A549 (cell line): ENCODE measurements at regions of chr2 and their contacts with region 1.

Region 1: GRCh38 chr2:158745044-158745865 is 49.9 kb upstream of the DAPL1 start:
- DNase-seq: peak; percentile 37 to 66
- ATAC-seq: peak; percentile 79 to 91
- H3K4me3 ChIP-seq: no peak overlapping the region
- H3K27ac ChIP-seq: no peak overlapping the region
- H3K4me1 ChIP-seq: no peaks in the 10 kb centered on the region
- CTCF ChIP-seq: peak; percentile 74
- EP300 ChIP-seq: no peak
- POLR2A ChIP-seq: no peak
- RAD21 ChIP-seq: peak; percentile 84 to 88

Region 2: DNA sequence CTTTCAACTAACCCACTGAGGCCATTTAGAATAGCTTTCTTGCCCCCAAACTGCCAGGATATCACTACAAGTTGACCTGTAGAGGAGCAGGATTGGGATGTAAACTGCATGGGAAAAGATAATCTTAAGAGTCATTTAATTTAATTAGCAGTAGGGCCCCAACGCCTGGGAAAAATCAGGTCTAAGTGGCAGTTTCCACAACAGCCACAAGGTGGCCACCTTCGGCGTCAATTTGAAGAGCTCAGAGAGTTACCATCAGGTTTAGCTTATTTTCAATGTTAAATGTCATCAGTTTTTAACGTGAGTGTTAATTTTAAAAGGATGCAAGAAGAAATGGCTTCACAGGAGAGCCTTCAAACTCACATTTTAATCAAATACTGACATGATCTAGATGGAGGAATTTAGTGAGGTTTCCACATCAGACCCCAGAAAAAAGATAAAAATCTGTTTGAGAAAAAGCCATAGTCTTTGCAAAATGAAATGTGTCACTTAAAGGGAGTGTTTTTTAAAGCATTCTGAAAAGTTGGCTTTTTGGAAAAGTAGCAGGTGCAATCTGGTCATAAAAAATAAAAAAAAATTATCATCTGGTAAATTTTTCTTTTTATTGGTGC is 720.9 kb before region 1 on chr2:
- CTCF ChIA-PET with region 1: interaction called, 254 read pairs
- POLR2A ChIA-PET with region 1: no interaction called
- DNase-seq: peak; percentile 18 to 39
- ATAC-seq: peak; percentile 59 to 89; a peak in 3 of 6 replicates
- H3K4me3 ChIP-seq: no peak overlapping the region
- H3K27ac ChIP-seq: no peak overlapping the region
- H3K4me1 ChIP-seq: no peaks in the 10 kb centered on the region
- CTCF ChIP-seq: peak; percentile 81
- EP300 ChIP-seq: no peak
- POLR2A ChIP-seq: no peak
- RAD21 ChIP-seq: peak; percentile 77 to 78

Region 3: GRCh38 chr2:158179660-158180059 is 565.6 kb before region 1 on chr2:
- CTCF ChIA-PET with region 1: interaction called, 60 read pairs
- POLR2A ChIA-PET with region 1: no interaction called
- DNase-seq: peak in 1 of 2 experiments; percentile 18
- ATAC-seq: peak; percentile 54 to 74; a peak in 3 of 6 replicates
- H3K4me3 ChIP-seq: no peak overlapping the region
- H3K27ac ChIP-seq: no peak overlapping the region
- H3K4me1 ChIP-seq: no peaks in the 10 kb centered on the region
- CTCF ChIP-seq: peak; percentile 59
- EP300 ChIP-seq: no peak
- POLR2A ChIP-seq: no peak
- RAD21 ChIP-seq: peak; percentile 68 to 72

Region 4: DNA sequence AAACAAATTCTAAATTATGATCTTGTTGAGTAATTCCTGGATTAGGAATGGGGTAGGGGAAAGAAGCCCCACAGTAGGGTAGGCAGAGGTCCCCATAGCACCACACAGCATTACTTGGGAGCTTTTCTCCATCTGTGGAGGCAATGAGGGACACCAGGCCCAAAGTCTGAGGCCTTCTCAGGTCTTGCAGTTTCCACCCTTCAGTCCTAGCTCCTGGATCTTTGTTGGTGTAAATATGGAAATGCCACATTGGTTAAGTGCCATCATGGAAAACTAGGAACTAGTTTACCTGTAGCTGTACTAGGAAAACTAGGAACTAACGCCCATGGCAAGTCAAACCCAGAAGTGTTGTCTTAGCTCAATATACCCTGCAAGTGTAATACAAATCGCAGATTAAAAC is 63.4 kb before region 1 on chr2:
- CTCF ChIA-PET with region 1: interaction called, 13 read pairs
- POLR2A ChIA-PET with region 1: no interaction called
- DNase-seq: no peak
- ATAC-seq: no peak
- H3K4me3 ChIP-seq: no peak overlapping the region
- H3K27ac ChIP-seq: no peak overlapping the region
- H3K4me1 ChIP-seq: no peaks in the 10 kb centered on the region
- CTCF ChIP-seq: no peak
- EP300 ChIP-seq: no peak
- POLR2A ChIP-seq: no peak
- RAD21 ChIP-seq: no peak

Region 5: DNA sequence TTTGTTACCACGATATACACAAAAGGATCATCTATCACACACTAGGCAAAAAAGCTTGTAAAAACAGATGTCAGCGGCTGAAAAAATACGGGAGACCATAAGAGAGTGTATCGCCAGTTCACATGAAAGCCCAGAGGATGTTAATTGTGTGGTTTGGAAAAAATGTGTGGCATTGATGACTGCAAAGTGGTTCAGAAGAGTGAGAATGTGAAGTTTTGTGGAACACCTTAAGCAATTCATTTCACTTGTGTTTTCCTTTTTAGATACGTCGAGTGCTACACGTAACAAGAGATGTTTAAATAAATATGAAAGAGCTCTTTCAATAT is 11.9 kb before region 1 on chr2:
- CTCF ChIA-PET with region 1: interaction called, 39 read pairs
- POLR2A ChIA-PET with region 1: no interaction called
- DNase-seq: no peak
- ATAC-seq: no peak
- H3K4me3 ChIP-seq: no peak overlapping the region
- H3K27ac ChIP-seq: no peak overlapping the region
- H3K4me1 ChIP-seq: no peaks in the 10 kb centered on the region
- CTCF ChIP-seq: no peak
- EP300 ChIP-seq: no peak
- POLR2A ChIP-seq: no peak
- RAD21 ChIP-seq: no peak